GM12878 (cell line): ENCODE measurements at regions of chr14 and their contacts with region 1.

Region 1: DNA sequence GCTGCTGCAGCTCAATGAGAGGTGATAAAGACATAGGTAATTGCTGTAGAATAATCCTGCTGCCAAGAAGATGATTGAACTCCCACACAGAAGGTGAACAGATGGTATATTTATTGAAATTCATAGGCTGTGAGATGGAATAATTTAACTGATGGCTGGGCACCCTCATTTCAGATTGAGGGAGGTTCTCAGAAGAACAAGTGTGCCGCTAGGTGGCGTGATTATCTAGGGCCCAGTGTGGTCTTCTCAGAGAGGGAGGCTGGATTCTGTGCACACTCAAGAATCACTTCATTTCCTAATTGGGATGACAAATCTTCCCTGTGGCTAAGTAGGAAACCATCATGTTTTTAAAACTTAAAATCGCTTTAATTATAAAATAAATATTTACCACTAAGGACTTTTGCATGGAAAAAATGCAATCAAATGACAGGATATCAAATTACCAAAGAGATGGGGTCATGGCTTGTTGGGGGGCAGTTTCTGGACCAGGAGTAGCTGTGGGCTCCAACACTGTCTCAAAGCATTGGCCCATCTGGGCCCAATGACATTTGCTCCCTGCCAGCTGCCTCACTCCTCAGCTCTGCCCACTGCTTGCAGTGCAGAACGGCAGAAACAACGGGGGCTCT is 132.3 kb downstream of the SNAPC1 start:
- DNase-seq: no peak
- ATAC-seq: peak; percentile 69
- H3K4me3 ChIP-seq: no peak overlapping the region
- H3K27ac ChIP-seq: no peak overlapping the region
- H3K4me1 ChIP-seq: peaks cover 11% of the 10 kb centered on the region
- H3K27me3 ChIP-seq: no peaks in the 10 kb centered on the region
- CTCF ChIP-seq: peak; percentile 69 to 77 (median 69)
- EP300 ChIP-seq: no peak
- POLR2A ChIP-seq: no peak
- RAD21 ChIP-seq: peak; percentile 80

Region 2: DNA sequence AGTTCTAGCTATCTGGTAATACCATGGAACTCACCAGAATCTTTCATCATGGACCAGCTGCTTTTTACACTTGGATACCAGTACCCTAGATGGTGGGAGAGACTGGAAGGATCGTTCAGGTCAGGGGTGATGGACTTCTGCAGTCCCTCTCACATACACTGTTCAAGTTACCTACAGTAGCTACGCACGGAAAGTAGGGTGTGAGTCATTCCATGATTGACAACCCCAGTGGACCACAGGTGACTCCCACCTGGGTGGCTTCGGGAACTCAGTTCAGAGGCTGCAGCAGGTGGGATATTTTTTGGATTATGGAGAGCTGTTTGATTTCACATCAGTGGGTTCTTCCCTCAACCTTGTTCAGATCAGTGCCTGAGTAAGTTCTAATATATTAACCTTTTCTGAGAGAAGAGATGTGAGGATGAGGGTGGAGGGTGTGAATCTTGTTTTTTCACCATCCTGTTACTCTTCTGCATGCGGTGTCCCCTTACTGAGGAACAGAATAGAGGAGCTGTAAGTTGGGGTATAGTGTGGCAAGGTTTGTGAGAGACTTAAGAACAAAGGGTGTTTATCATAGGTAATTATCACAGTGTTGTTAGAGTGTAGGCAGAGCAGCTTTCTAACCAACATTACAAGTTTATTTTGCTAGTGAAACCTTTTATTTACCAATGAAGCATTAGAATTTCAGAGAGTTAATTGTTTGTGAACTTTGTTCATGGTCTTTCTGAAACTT is 533.6 kb before region 1 on chr14:
- CTCF ChIA-PET with region 1: no interaction called
- POLR2A ChIA-PET with region 1: no interaction called
- RAD21 ChIA-PET with region 1: no interaction called
- SMC1A ChIA-PET with region 1: no interaction called
- in situ Hi-C with region 1: no loop called
- intact Hi-C with region 1: no loop called
- DNase-seq: no peak
- ATAC-seq: peak; percentile 42
- H3K4me3 ChIP-seq: no peak overlapping the region
- H3K27ac ChIP-seq: no peak overlapping the region
- H3K4me1 ChIP-seq: peaks cover 21% of the 10 kb centered on the region
- H3K27me3 ChIP-seq: no peaks in the 10 kb centered on the region
- CTCF ChIP-seq: no peak
- EP300 ChIP-seq: no peak
- POLR2A ChIP-seq: no peak
- RAD21 ChIP-seq: no peak

Region 3: GRCh38 chr14:61718039-61718438 is 176.5 kb before region 1 on chr14:
- CTCF ChIA-PET with region 1: no interaction called
- POLR2A ChIA-PET with region 1: no interaction called
- RAD21 ChIA-PET with region 1: no interaction called
- SMC1A ChIA-PET with region 1: no interaction called
- in situ Hi-C with region 1: no loop called
- intact Hi-C with region 1: no loop called
- DNase-seq: no peak
- ATAC-seq: peak; percentile 29
- H3K4me3 ChIP-seq: no peak overlapping the region
- H3K27ac ChIP-seq: no peak overlapping the region; the same call in 1 of the 2 replicates
- H3K4me1 ChIP-seq: peaks cover 33% of the 10 kb centered on the region
- H3K27me3 ChIP-seq: no peaks in the 10 kb centered on the region
- CTCF ChIP-seq: no peak
- EP300 ChIP-seq: no peak
- POLR2A ChIP-seq: no peak
- RAD21 ChIP-seq: no peak

Region 4: GRCh38 chr14:61860294-61860918 is 34.2 kb before region 1 on chr14:
- CTCF ChIA-PET with region 1: interaction called, 33 read pairs
- POLR2A ChIA-PET with region 1: no interaction called
- RAD21 ChIA-PET with region 1: interaction called, 13 read pairs
- SMC1A ChIA-PET with region 1: interaction called, 29 read pairs
- in situ Hi-C with region 1: no loop called
- intact Hi-C with region 1: loop called (anchors 2 kb)
- DNase-seq: peak; percentile 44
- ATAC-seq: peak; percentile 100
- H3K4me3 ChIP-seq: no peak overlapping the region
- H3K27ac ChIP-seq: no peak overlapping the region
- H3K4me1 ChIP-seq: no peaks in the 10 kb centered on the region
- H3K27me3 ChIP-seq: no peaks in the 10 kb centered on the region
- CTCF ChIP-seq: peak; percentile 84 to 96 (median 87)
- EP300 ChIP-seq: no peak
- POLR2A ChIP-seq: no peak
- RAD21 ChIP-seq: peak; percentile 81

Region 5: GRCh38 chr14:61872452-61872851 is 22.1 kb before region 1 on chr14:
- CTCF ChIA-PET with region 1: interaction called, 13 read pairs
- POLR2A ChIA-PET with region 1: interaction called, 10 read pairs
- RAD21 ChIA-PET with region 1: interaction called, 18 read pairs
- SMC1A ChIA-PET with region 1: interaction called, 24 read pairs
- in situ Hi-C with region 1: no loop called
- intact Hi-C with region 1: loop called (anchors 2 kb)
- DNase-seq: peak; percentile 73
- ATAC-seq: peak; percentile 96
- H3K4me3 ChIP-seq: no peak overlapping the region
- H3K27ac ChIP-seq: no peak overlapping the region
- H3K4me1 ChIP-seq: peaks cover 18% of the 10 kb centered on the region; the same call in 1 of the 2 replicates
- H3K27me3 ChIP-seq: no peaks in the 10 kb centered on the region
- CTCF ChIP-seq: no peak
- EP300 ChIP-seq: peak in 1 of 2 experiments; percentile 92; a peak in 2 of 4 replicates
- POLR2A ChIP-seq: no peak
- RAD21 ChIP-seq: no peak

Region 6: GRCh38 chr14:61878931-61879330 is 15.6 kb before region 1 on chr14:
- CTCF ChIA-PET with region 1: interaction called, 19 read pairs
- POLR2A ChIA-PET with region 1: interaction called, 10 read pairs
- RAD21 ChIA-PET with region 1: interaction called, 4 read pairs
- SMC1A ChIA-PET with region 1: interaction called, 24 read pairs
- in situ Hi-C with region 1: no loop called
- intact Hi-C with region 1: no loop called
- DNase-seq: no peak
- ATAC-seq: no peak
- H3K4me3 ChIP-seq: no peak overlapping the region
- H3K27ac ChIP-seq: no peak overlapping the region
- H3K4me1 ChIP-seq: peaks cover 9% of the 10 kb centered on the region; the same call in 1 of the 2 replicates
- H3K27me3 ChIP-seq: no peaks in the 10 kb centered on the region
- CTCF ChIP-seq: no peak
- EP300 ChIP-seq: no peak
- POLR2A ChIP-seq: no peak
- RAD21 ChIP-seq: no peak